HEK293 (cell line): ENCODE measurements at regions of chr7 and their contacts with region 1.

Region 1: GRCh38 chr7:100889761-100890634 is 483 bp upstream of the UFSP1 start:
- H3K4me3 ChIP-seq: peak overlapping the region; percentile 48
- H3K27ac ChIP-seq: peak overlapping the region; percentile 37; the same call in 1 of the 2 replicates
- H3K4me1 ChIP-seq: peaks cover 4% of the 10 kb centered on the region; the same call in 1 of the 2 replicates
- CTCF ChIP-seq: peak; percentile 35; the same call in 1 of the 2 replicates

Region 2: DNA sequence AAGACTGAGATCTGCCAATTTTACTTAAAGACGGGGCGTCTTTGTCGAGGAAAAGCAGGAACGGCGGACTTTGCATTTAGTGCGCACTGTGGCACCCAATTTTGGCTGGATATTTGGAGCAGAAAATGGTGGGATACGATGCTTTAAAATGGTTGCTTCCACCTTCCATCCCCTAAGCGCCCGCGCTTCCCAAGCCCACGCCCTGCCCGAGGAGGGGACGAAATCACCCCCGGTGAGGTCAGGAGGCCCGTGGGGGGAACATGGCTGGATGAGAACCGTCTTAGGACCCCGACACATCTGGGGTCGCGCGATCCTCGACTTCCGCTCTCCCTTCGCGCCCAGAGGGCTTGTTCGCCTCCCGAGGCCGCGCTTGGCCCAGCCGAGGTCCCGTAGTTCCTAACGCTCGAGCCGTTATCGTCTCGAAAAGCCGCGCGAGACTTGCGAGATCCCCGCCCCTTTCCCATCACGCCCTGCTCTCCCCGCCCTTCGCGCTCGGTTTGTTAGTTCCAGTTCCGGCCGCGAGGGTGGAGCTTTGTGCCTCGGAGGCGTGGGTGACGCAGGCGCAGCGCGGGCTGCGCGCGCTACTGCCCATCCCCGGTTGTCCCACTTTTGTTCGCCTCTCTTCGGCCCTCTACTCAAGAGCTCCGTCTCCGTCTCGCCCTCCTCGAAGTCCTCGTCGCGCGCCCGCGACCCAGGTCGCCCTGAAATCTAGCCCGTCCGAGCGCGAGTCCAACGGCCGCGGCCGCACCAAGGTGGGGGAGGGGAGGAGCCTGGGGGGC is 15.2 kb before region 1 on chr7 and contains the start of gene SRRT:
- CTCF ChIA-PET with region 1: interaction called, 4 read pairs
- POLR2A ChIA-PET with region 1: interaction called, 198 read pairs
- H3K4me3 ChIP-seq: peak within 1 kb of the TSS; percentile 68
- H3K27ac ChIP-seq: peak within 1 kb of the TSS; percentile 78
- H3K4me1 ChIP-seq: no peaks in the 10 kb centered on the region
- CTCF ChIP-seq: peak; percentile 78

Region 3: GRCh38 chr7:101058355-101058754 is 168.4 kb after region 1 on chr7:
- CTCF ChIA-PET with region 1: interaction called, 14 read pairs
- POLR2A ChIA-PET with region 1: interaction called, 4 read pairs
- H3K4me3 ChIP-seq: no peak overlapping the region
- H3K27ac ChIP-seq: no peak overlapping the region
- H3K4me1 ChIP-seq: no peaks in the 10 kb centered on the region
- CTCF ChIP-seq: no peak

Region 4: DNA sequence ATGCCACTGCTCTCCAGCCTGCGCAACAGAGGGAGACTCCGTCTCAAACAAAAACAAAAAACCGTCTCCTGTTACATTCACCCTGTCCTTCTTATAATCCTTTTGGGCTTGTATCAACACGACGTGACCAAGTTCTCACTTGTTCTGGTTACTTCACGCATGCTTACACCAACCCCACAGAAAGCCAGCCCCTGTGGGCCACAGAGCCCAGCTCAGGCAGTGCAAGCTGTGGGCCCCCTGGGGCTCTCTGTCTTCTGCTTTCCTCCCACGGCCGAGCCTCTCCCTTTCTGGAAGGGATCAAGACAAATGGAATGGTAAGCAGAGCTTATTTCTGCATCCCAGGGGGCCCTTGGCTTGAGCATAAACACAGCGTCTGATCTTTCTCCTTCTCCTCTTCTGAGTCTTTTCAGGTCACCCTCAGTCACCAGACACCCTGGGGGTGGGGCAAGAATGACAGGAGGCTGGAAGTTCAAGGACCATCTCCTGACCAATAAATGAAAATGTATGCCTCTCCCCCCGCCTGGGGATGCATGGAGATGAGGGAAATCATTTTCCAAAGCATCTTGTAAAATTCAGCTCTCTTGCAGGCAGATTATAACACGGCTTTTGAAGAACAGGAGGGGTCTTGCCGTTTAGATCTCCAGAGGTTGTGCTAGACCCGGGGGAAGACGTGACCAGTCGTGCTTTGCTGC is 176.3 kb after region 1 on chr7:
- CTCF ChIA-PET with region 1: interaction called, 11 read pairs
- POLR2A ChIA-PET with region 1: interaction called, 4 read pairs
- H3K4me3 ChIP-seq: no peak overlapping the region
- H3K27ac ChIP-seq: peak overlapping the region; percentile 42
- H3K4me1 ChIP-seq: peaks cover 3% of the 10 kb centered on the region; the same call in 1 of the 2 replicates
- CTCF ChIP-seq: no peak

Region 5: GRCh38 chr7:101077303-101078089 is 187.5 kb after region 1 on chr7:
- CTCF ChIA-PET with region 1: interaction called, 10 read pairs
- POLR2A ChIA-PET with region 1: no interaction called
- H3K4me3 ChIP-seq: no peak overlapping the region
- H3K27ac ChIP-seq: no peak overlapping the region
- H3K4me1 ChIP-seq: no peaks in the 10 kb centered on the region
- CTCF ChIP-seq: peak; percentile 97

Region 6: GRCh38 chr7:101094416-101095375 is 204.7 kb after region 1 on chr7:
- CTCF ChIA-PET with region 1: no interaction called
- POLR2A ChIA-PET with region 1: interaction called, 10 read pairs
- H3K4me3 ChIP-seq: no peak overlapping the region
- H3K27ac ChIP-seq: no peak overlapping the region
- H3K4me1 ChIP-seq: no peaks in the 10 kb centered on the region
- CTCF ChIP-seq: peak; percentile 65; the same call in 1 of the 2 replicates